Activated B cell treated with CpG ODN at 0.5 μM for 24 hours (primary cell): ENCODE measurements at regions of chr17 and their contacts with region 1.

Region 1: DNA sequence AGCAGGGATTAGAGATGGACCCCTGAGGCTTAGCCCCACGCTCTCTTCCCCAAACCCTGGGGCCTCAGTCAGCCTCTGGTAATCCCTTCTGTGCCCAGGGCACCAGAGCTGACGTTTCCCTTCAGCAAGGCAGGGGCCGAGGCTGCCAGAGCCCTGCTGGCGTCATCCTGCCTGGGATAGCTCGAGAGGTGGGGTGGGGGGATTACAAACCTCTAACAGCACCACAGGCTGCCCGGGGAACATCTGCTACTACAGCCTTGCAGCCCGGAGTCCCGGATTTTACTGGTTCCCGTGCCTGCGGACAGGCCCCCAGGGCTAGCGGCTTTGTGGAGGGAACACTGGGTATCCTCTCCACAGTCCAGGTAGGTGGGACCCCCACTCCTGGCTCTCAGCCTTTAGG is at the start of gene AANAT:
- DNase-seq: no peak
- ATAC-seq: no peak
- H3K4me3 Mint-ChIP-seq: no peak within 1 kb of the TSS
- H3K27ac Mint-ChIP-seq: peak within 1 kb of the TSS; percentile 56
- H3K4me1 Mint-ChIP-seq: peaks cover 28% of the 10 kb centered on the region
- H3K27me3 Mint-ChIP-seq: no peaks in the 10 kb centered on the region
- CTCF ChIP-seq: no peak
- total RNA-seq, gene AANAT: 0.55 TPM in 1 of 2 replicates, not detected in the other

Region 2: GRCh38 chr17:76397687-76398487 is 69.5 kb before region 1 on chr17:
- CTCF ChIA-PET with region 1: interaction called, 5 read pairs
- POLR2A ChIA-PET with region 1: interaction called, 11 read pairs
- intact Hi-C with region 1: no loop called
- DNase-seq: peak; percentile 79
- ATAC-seq: peak; percentile 93
- H3K4me3 Mint-ChIP-seq: no peak overlapping the region
- H3K27ac Mint-ChIP-seq: no peak overlapping the region
- H3K4me1 Mint-ChIP-seq: peaks cover 3% of the 10 kb centered on the region
- H3K27me3 Mint-ChIP-seq: no peaks in the 10 kb centered on the region
- CTCF ChIP-seq: peak; percentile 98

Region 3: DNA sequence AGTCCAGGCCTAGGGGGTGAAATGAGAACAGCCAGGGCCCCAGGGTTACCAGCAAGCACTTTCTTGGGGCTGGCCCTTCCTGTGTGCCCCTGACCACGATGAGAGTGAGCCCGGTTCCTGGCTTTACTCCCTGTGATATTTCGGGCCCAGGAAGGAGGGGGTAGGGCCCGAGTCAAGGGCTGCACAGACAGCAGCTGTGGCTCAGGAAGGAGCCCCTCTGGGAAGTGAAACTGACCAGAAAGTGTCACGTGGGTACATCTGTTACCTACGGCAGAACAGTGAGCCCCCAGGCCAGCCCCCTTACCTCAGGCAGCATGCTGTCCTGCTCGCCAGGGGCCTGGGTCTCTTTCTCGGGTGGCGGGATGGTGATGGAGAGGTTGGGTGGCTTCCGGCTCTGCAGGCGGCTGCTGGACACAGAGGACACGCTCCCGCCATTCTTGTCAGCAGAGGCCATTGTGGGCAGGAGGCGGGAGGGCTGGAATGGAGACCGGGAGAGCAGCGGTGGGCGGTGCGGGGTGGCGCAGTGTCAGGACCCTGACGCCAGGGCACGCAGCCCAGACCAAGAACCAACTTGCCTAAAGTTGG is 13.8 kb after region 1 on chr17:
- CTCF ChIA-PET with region 1: interaction called, 14 read pairs
- POLR2A ChIA-PET with region 1: interaction called, 23 read pairs
- intact Hi-C with region 1: loop called (anchors 1 kb)
- DNase-seq: peak; percentile 61
- ATAC-seq: peak; percentile 64
- H3K4me3 Mint-ChIP-seq: peak overlapping the region; percentile 81
- H3K27ac Mint-ChIP-seq: peak overlapping the region; percentile 92
- H3K4me1 Mint-ChIP-seq: peaks cover 79% of the 10 kb centered on the region
- H3K27me3 Mint-ChIP-seq: no peaks in the 10 kb centered on the region
- CTCF ChIP-seq: no peak

Region 4: GRCh38 chr17:76492989-76493501 is 25.7 kb after region 1 on chr17:
- CTCF ChIA-PET with region 1: interaction called, 9 read pairs
- POLR2A ChIA-PET with region 1: interaction called, 769 read pairs
- intact Hi-C with region 1: no loop called
- DNase-seq: peak; percentile 53
- ATAC-seq: peak; percentile 59
- H3K4me3 Mint-ChIP-seq: peak overlapping the region; percentile 82
- H3K27ac Mint-ChIP-seq: peak overlapping the region; percentile 95
- H3K4me1 Mint-ChIP-seq: peaks cover 95% of the 10 kb centered on the region
- H3K27me3 Mint-ChIP-seq: no peaks in the 10 kb centered on the region
- CTCF ChIP-seq: no peak

Region 5: DNA sequence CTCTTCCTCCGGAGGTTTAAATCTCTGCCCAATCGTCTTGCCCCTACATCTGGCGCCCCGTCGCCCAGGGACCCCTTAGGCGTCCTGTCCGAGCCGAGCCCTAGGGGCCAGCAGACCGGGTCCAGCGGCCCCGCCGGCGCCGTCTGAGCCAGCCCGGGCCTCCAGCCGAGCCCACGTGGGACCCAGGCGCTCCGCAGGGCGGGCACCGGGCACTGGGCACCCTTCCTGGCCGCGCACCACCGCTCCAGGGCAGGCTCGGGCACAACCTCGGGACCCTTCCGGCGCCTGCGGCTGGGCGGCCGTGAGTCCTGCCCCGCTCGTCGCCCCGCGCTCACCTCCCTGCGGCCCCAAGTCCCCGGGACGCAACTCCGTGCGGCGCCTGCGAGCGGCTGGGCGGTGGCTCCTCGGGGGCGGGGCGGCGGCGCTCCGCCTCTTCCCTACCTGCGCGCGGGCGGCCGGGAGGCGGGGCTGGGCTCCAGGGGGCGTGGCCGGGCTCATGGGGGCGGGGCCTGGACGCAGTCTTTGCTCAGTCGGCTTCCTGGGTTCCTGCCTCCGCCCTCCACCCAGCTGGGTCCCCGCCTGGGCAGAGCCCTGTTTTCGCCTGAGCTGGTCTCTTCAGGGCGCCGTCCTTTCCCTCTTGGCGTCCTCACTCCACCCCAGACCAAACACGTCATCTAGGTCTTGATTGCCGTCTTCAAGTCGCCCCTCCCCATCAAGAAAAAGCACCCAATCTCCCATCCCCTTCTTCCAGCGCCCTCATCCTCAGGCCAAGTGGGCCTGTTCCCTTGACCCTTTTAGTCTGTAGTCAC is 33.9 kb after region 1 on chr17 and contains the start of gene RHBDF2:
- CTCF ChIA-PET with region 1: interaction called, 129 read pairs
- POLR2A ChIA-PET with region 1: interaction called, 769 read pairs
- intact Hi-C with region 1: loop called (anchors 1 kb)
- DNase-seq: peak; percentile 100
- ATAC-seq: peak; percentile 87
- H3K4me3 Mint-ChIP-seq: peak within 1 kb of the TSS; percentile 99
- H3K27ac Mint-ChIP-seq: peak within 1 kb of the TSS; percentile 95
- H3K4me1 Mint-ChIP-seq: peaks cover 64% of the 10 kb centered on the region
- H3K27me3 Mint-ChIP-seq: no peaks in the 10 kb centered on the region
- CTCF ChIP-seq: no peak
- total RNA-seq, gene RHBDF2: 150 and 189 TPM in 2 replicates

Region 6: DNA sequence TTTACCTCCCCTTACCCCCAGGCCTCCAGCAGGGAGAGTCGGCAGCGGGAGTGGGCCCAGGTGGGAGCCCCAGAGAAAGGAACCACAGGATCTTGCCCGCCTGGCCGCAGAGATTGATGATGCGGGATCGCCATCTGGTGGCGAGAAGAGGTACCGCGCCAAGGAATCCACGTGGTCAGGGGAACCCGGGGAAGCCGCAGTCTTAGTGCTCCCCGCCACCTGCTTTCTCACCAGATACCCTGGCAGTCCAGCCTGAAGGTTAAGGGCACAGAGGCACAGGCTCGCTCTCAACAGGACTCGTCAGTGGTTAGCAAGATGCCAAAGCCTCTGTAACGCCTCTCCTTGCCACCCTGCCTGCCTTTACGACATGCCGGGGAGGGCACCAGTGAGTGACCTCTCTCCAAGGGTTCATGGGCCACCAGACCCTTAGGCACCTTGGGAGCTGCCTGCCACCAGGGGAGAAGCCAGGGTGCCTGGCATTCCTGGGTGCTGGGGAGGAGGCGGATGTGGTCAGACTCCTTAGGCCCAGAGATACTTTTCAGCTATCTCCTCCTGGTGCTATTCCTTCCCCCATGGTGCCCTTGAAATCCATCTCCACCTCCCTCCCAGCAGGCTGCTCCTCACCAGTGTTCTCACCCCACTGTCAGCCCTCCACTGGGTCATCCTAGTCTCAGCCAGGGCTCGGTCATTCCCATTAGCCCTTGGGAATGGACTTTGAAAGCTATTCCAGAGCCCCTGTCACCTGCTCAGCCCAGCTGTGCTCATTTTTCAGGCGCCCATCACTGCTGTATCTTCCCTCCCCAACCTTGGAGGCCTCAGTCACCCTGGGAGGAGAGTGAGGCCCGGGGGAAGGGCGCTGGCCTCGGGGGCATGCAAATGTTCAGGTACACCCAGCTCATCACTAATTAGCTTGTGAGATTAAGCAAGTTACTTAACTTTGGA is 39.3 kb after region 1 on chr17:
- CTCF ChIA-PET with region 1: interaction called, 129 read pairs
- POLR2A ChIA-PET with region 1: interaction called, 769 read pairs
- intact Hi-C with region 1: loop called (anchors 1 kb)
- DNase-seq: peak; percentile 93
- ATAC-seq: peak; percentile 85
- H3K4me3 Mint-ChIP-seq: no peak overlapping the region
- H3K27ac Mint-ChIP-seq: peak overlapping the region; percentile 50
- H3K4me1 Mint-ChIP-seq: peaks cover 26% of the 10 kb centered on the region
- H3K27me3 Mint-ChIP-seq: peaks cover 4% of the 10 kb centered on the region
- CTCF ChIP-seq: peak; percentile 66